Prostate gland (tissue), 2 donors: ENCODE measurements at regions of chr1 and their contacts with region 1.

Region 1: DNA sequence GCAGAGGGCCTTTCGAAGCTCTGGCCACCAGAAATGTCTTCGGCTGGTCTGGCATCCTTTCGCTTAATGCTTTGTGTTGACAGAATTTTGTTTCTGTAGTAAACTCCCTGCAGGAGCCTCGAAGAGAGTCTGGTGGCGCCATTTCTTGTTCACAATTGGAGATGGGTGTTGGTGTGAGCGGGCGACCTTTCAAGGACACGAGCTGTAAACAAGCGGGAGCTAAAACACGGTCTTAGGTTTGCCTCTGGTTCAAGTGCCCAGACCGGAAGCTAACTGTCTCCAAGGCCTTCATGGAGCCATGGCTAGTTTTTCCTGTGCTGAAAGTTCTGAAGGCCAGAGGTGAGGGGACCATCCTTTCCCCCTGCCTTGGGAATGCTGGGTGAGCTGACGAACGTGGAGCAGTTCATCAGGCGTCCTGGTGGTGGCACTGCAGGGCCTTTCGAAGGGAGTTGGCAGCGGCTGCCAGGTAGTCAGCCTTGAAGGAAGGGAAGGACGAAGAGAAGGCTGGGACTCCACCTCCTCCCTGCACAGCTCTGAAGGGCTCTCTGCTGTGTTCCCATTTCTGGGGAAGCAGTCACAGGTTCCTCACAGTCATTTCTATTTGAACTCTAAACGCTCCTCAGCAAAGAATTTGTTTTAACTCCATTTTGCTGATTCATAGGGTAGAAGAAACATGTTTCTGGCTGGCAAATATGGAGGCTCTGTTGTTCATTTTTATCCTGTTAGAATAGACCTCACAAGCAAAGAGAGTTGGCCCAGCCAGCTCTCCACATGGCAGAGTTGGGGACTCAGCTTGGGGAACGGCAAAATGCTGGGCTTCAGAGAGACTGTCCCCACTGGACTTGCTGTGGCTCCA is 35.2 kb downstream of the URB2 start:
- DNase-seq: peak; percentile 78
- H3K4me3 ChIP-seq: no peak overlapping the region
- H3K27ac ChIP-seq: no peak overlapping the region
- H3K4me1 ChIP-seq: no peaks in the 10 kb centered on the region
- H3K27me3 ChIP-seq: no peaks in the 10 kb centered on the region
- CTCF ChIP-seq: peak; percentile 63 to 94 (median 85)
- POLR2A ChIP-seq: no peak

Region 2: DNA sequence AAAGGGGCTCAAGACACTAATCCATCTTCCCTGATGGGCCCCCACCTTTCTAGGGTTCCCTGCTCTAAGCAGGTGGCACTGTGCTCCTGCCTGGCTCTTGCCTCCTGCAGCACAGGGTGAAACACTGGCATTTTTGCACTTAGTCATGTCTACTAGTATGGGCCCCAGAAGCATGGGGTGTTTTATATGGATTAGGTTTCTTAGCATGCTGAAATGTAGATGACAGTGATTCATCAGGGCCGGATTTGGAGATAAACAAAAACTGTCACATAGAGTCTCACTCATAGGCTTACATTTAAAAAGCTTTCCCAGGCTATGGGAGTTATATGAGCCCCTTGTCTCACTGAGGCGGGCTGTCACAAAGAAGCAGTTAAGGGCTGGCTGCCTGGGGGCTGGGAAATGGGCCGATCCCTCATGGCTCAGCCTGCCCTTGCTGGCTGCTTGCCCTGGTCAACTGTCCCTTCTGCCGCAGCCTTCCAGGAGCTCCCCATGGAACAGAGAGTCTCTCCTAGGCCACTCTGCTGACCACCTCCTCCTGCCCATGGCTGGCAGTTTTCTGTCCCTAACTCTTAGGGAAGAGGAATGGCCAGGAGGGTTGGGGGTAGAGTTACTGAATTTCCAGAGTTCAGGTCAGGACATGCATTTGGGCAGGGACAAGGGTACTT is 412.3 kb after region 1 on chr1:
- intact Hi-C with region 1: loop called (anchors 5 kb)
- DNase-seq: no peak
- H3K4me3 ChIP-seq: no peak overlapping the region
- H3K27ac ChIP-seq: no peak overlapping the region
- H3K4me1 ChIP-seq: no peaks in the 10 kb centered on the region
- H3K27me3 ChIP-seq: no peaks in the 10 kb centered on the region
- CTCF ChIP-seq: no peak
- POLR2A ChIP-seq: no peak

Region 3: GRCh38 chr1:230208619-230209261 is 547.5 kb after region 1 on chr1:
- intact Hi-C with region 1: loop called (anchors 5 kb)
- DNase-seq: no peak
- H3K4me3 ChIP-seq: no peak overlapping the region
- H3K27ac ChIP-seq: peak overlapping the region; percentile 39 to 49
- H3K4me1 ChIP-seq: no peaks in the 10 kb centered on the region
- H3K27me3 ChIP-seq: no peaks in the 10 kb centered on the region
- CTCF ChIP-seq: no peak
- POLR2A ChIP-seq: no peak

Region 4: DNA sequence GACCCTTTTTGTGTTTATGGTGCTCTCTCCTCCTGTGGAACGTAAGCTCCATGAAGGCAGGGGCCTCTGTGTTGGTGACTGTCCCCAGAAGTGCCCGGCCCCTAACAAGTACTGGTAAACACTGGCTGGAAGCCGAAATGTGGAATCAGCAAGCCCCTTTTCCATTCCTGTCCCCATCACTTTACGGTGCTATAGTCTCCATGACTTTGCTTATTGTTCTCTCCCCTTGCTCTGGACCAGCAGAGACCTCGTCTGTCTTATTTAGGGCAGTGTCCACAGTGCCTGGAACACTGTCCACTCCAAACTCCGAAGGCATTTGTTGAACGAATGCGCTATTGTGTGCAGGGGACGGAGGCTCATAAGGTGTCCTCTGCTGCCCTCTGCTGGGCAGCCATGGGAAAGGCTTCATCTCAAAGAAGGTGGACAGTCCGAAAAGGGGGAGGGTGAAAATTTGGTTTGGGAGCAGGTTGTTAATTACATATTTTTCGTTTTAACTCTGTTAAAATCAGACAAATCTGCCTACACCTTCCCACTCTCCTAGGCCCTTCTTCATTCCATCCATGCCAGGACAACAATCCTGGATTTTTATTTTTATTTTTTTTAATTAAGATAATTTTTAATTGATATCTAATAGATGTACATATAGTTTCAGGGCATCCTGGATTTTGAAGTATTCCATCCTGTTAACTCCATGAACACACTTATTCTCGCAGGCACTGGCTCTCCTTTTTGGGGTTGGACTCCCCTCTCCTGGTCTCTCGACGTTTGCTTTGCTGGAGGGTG is 649.3 kb after region 1 on chr1:
- intact Hi-C with region 1: loop called (anchors 2 kb)
- DNase-seq: peak; percentile 69
- H3K4me3 ChIP-seq: no peak overlapping the region
- H3K27ac ChIP-seq: no peak overlapping the region
- H3K4me1 ChIP-seq: no peaks in the 10 kb centered on the region
- H3K27me3 ChIP-seq: no peaks in the 10 kb centered on the region
- CTCF ChIP-seq: peak; percentile 74 to 91 (median 88)
- POLR2A ChIP-seq: no peak